ENCODE measurements at regions of chr4 and their contacts with region 1.

Region 1: DNA sequence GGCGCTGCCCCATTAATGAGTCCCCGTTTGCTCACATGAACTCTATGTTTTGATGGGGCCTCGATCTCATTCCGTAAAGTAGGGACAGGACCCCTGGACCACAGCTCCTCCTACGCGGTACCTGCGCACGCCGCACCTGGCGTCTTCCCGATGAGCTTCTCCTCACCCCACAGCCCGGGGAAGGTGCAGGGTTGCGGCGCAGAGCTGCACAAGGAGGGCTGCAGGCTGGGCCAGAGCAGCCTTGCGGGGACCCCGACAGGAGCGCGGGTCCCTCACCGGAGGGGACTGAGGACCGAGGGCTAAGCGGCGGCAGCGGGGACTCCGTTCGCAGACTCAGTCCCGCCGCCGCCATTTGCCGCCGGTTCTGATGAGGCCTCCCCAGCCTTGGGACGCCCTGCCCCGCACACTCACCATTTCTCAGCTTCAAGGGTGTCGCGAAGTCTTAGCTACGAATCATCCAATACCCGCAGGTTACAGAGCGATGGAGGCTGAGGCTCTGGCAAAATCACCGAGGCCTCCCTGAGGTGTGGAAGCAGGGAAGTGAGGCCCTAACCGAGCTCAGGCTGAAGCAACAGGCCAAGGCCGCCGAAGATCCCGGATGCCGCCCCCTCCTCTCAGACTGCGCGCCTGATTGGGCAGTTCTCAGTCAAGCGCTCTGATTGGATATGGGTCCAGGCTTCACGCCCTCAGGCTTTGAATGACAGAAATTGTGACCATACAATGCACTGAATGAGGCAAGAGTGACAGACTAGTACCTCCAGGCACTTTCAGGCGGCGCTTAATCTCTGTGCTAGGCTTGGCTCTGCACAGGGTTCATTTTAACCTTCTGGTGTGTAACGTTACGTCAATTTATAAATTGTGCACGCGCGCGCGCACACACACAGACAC is 25.1 kb downstream of the ZNF721 start:
- DNase-seq: peak; percentile 96
- ATAC-seq: peak; percentile 99
- H3K4me3 Mint-ChIP-seq: peak overlapping the region; percentile 97
- H3K27ac Mint-ChIP-seq: peak overlapping the region; percentile 98
- H3K4me1 Mint-ChIP-seq: peaks cover 33% of the 10 kb centered on the region
- H3K27me3 Mint-ChIP-seq: no peaks in the 10 kb centered on the region
- CTCF ChIP-seq: no peak

Region 2: DNA sequence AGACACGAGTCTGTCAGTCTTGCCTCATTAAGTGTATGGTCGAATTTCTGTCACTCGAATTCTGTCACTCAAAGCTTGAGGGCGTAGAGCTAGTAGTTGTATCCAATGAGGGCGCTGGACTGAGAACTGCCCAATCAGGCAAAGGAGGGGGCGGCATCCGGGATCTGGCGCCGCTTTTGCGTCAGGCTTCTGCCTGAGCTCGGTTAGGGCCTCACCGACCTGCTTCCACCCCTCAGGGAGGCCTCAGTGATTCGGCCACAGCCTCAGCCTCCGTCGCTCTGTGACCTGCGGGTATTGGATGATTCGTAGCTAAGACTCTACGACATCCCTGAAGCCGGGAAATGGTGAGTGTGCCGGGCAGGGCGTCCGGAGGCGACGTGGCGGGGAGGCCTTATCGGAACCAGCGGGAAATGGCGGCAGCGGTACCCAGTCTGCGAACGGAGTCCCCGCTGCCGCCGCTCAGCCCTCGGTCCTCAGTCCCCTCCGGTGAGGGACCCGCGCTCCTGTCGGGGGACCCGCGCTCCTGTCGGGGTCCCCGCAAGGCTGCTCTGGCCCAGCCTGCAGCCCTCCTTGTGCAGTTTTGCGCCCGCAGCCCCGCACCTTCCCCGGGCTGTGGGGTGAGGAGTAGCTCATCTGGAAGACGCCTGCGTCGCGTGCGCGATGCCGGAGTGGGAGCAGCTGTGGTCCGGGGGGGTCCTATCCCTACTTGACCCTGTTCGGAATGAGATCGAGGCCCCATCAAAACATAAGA is 261.2 kb before region 1 on chr4:
- CTCF ChIA-PET with region 1: no interaction called
- POLR2A ChIA-PET with region 1: no interaction called
- intact Hi-C with region 1: no loop called
- DNase-seq: peak; percentile 16
- ATAC-seq: peak; percentile 57
- H3K4me3 Mint-ChIP-seq: peak overlapping the region; percentile 15
- H3K27ac Mint-ChIP-seq: no peak overlapping the region
- H3K4me1 Mint-ChIP-seq: peaks cover 31% of the 10 kb centered on the region
- H3K27me3 Mint-ChIP-seq: peaks cover 1% of the 10 kb centered on the region
- CTCF ChIP-seq: no peak

Region 3: DNA sequence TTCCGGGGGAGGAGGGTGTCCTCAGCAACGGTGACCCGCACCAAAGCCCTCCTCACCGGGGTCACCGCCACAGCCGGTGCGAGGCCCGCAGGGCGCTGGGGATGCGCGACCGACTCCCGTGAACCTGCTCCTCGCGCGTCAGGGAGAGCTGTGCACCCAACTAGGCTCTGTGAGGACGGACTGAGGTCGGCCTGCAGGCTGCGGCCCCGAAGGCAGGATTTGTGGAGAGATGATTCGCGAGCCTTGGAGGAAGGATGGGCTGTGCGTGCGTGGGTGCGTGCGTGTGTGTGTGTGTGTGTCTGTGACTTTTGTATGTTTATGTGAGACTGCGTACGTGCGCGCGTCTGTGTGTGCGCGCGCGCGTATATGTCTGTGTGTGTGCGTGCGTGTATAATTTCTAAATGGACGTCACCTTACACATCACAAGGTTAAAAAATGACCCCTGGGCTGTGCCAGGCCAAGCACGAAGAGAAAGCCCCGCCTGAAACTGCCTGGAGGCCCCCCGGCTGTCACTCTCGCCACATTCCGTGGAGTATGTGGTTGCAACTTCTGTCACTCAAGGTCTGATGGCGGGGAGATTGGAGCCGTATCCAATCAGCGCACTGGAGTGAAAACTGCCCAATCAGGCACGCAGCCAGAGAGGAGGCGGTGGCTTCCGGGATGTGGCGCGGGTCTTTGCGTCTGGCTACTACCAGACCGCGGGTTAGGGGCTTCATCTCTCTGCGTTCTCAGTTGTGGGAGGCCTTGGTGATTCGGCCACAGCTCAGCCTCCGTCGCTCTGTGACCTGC is 136.5 kb before region 1 on chr4 and contains the start of gene ZNF141:
- CTCF ChIA-PET with region 1: no interaction called
- POLR2A ChIA-PET with region 1: no interaction called
- intact Hi-C with region 1: no loop called
- DNase-seq: peak; percentile 96
- ATAC-seq: peak; percentile 94
- H3K4me3 Mint-ChIP-seq: peak within 1 kb of the TSS; percentile 98
- H3K27ac Mint-ChIP-seq: peak within 1 kb of the TSS; percentile 100
- H3K4me1 Mint-ChIP-seq: peaks cover 22% of the 10 kb centered on the region
- H3K27me3 Mint-ChIP-seq: no peaks in the 10 kb centered on the region
- CTCF ChIP-seq: no peak
- total RNA-seq, gene ZNF141: 27.7 to 29.3 TPM

Region 4: GRCh38 chr4:498328-498904 is 24.6 kb after region 1 on chr4:
- CTCF ChIA-PET with region 1: interaction called, 4 read pairs
- POLR2A ChIA-PET with region 1: interaction called, 15 read pairs
- intact Hi-C with region 1: no loop called
- DNase-seq: peak; percentile 29
- ATAC-seq: peak; percentile 40
- H3K4me3 Mint-ChIP-seq: peak overlapping the region; percentile 88
- H3K27ac Mint-ChIP-seq: peak overlapping the region; percentile 94
- H3K4me1 Mint-ChIP-seq: peaks cover 49% of the 10 kb centered on the region
- H3K27me3 Mint-ChIP-seq: no peaks in the 10 kb centered on the region
- CTCF ChIP-seq: no peak

Region 5: GRCh38 chr4:560731-561291 is 87.0 kb after region 1 on chr4:
- CTCF ChIA-PET with region 1: no interaction called
- POLR2A ChIA-PET with region 1: no interaction called
- intact Hi-C with region 1: no loop called
- DNase-seq: no peak
- ATAC-seq: no peak
- H3K4me3 Mint-ChIP-seq: no peak overlapping the region
- H3K27ac Mint-ChIP-seq: no peak overlapping the region
- H3K4me1 Mint-ChIP-seq: no peaks in the 10 kb centered on the region
- H3K27me3 Mint-ChIP-seq: no peaks in the 10 kb centered on the region
- CTCF ChIP-seq: no peak

Measured in activated CD8-positive, alpha-beta T cell treated with anti-CD3 and anti-CD28 coated beads for 36 hours (primary cell).